Right ventricle myocardium inferior (tissue), 1 donor: ENCODE measurements at regions of chrX and their contacts with region 1.

Region 1: GRCh38 chrX:69070949-69071650 is 94.2 kb downstream of the PJA1 start:
- DNase-seq: peak; percentile 80
- ATAC-seq: peak; percentile 87

Region 2: GRCh38 chrX:69153060-69153730 is 82.1 kb after region 1 on chrX:
- intact Hi-C with region 1: no loop called
- DNase-seq: no peak
- ATAC-seq: no peak

Region 3: GRCh38 chrX:69216911-69217310 is 145.8 kb after region 1 on chrX:
- intact Hi-C with region 1: loop called (anchors 5 kb)
- DNase-seq: no peak
- ATAC-seq: no peak